GM13976 (cell line): ENCODE measurements at regions of chr1 and their contacts with region 1.

Region 1: DNA sequence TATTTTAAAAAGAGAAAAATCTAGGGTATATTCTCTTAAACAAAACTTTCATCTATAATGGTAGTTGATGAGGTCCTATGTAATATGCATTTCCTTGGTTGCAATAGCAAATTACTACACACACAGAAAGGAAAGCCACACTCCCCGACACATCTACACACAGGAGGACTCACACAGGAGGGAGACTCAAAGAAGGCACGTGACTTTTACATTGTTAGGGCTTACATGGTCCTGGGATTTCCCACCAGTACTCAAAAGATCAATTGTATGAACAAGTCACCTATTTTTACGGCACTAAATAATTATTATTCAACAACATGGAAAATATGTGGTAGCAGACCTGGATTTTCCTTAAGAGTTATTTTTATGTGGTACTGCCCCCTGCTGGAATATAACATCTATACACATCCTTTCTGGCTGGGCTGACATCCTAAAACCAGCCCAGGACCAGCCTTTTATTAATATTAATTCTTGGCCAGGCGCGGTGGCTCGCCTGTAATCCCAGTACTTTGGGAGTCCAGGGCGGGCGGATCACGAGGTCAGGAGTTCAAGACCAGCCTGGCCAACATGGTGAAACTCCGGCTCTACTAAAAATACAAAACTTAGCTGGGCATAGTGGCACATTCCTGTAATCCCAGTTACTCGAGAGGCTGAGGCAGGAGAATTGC is 33.9 kb upstream of the LGALS8 start:
- DNase-seq: peak; percentile 70
- CTCF ChIP-seq: peak; percentile 26

Region 2: DNA sequence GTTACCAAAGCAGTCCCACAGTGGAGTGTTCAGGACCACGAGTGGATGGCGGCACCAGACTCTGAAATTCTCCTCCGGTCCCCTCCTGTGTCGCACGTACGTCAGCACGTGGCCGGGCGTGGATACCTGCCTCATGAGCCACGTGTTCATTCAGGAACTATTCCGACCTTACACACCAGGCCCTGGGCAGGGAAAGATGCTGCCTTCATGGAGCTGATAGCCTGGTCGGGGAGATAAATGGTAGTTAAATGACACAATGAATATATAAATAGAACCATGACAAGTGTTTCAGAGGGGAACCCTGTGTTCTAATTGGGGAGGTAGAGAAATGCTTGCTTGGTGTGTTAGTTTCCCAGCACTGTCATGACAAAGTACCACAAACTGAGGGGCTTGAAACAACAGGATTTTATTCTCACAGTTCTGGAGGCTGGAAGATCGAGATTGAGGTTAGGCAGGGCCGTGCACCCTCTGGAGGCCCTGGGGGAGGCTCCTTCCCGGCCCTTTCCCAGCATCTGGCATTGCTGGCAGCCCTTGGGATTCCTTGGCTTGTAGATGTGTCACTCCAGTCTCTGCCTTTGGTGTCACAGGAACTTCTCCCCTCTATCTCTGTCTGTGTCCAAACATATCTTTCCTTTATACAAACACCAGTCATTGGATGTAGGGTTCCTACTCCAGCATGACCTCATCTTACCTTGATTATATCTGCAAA is 376.4 kb before region 1 on chr1:
- in situ Hi-C with region 1: loop called (anchors 10 kb)
- DNase-seq: no peak
- CTCF ChIP-seq: no peak

Region 3: DNA sequence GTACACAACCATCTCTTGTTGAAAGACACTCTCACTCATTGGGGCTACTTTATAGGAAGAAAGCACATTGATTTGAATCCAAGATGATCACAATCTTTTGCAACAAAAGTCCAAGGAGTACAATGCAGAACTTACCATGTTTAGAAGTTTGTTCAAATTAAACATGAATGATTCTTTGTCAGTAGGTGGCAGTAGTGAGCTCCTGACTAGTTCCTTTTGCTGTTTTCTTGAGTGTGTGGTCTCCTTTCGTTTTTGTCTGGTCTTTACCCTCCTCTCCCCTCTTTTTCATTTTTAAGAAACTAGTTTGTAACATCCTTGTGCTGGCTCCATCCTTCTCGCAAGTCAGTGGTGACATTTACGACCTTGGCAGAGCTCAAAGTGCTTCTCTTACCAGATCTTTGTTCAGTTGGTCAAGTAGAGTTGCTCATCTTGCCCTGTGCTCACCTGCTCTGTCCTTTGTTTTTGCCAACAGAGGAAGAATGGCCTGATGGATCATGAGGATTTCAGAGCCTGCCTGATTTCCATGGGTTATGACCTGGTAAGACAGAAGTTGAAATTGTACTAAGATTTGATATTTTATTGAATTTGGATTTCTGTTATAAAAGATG is 269.5 kb after region 1 on chr1:
- in situ Hi-C with region 1: no loop called
- DNase-seq: peak; percentile 69
- CTCF ChIP-seq: peak; percentile 35